Ascending aorta (tissue), 2 donors: ENCODE measurements at regions of chr1 and their contacts with region 1.

Region 1: DNA sequence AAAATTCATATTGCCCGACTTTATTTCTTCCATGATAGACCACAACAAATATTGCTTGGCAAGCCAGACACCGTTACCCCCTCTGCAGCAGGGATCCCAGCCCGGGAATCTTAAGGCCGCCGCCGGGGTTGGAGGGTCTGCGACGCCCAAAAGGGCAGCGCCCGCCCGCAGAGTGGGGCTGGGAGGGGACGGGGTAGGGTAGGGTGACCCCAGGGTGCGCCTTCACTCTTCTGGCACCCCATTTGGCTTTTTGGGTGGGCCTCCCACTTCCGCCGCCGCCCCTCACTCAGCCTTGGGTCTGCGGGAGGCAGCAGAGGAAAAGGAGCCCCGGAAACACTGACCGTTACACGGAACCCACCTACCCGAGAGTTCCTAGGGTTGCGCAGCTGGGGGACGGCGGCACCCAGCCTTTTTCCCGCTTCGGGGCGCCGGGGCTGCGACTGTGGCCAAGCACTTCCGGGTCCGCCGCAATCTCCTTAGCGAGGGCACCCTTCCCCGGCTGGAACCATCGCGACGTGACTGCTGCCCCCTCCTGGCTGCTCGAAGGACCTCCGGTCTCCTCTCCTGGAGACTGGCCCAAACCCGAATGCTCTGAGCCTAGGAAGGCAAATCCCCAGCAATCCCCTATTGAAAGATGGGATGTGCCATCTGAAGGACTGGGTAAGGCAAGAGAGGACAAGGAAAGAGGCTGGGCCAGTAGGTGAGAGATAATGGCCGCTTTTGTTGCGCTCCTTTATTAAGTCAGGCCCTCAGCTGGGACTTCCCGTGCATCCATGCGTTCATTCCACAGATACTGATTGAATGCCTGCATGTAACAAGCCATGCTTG is at the start of gene PIGC:
- DNase-seq: peak; percentile 24 to 94
- H3K4me3 ChIP-seq: peak within 1 kb of the TSS; percentile 84 to 98
- H3K27ac ChIP-seq: peak within 1 kb of the TSS; percentile 76 to 79
- H3K4me1 ChIP-seq: peaks cover 0 to 10% of the 10 kb centered on the region in 2 donors
- H3K27me3 ChIP-seq: no peaks in the 10 kb centered on the region
- CTCF ChIP-seq: peak; percentile 75 to 84 (median 82)
- total RNA-seq, gene PIGC: 20.0 TPM

Region 2: GRCh38 chr1:171801487-171801891 is 642.4 kb before region 1 on chr1:
- intact Hi-C with region 1: loop called (anchors 5 kb)
- DNase-seq: no peak
- H3K4me3 ChIP-seq: no peak overlapping the region
- H3K27ac ChIP-seq: no peak overlapping the region
- H3K4me1 ChIP-seq: no peaks in the 10 kb centered on the region
- H3K27me3 ChIP-seq: no peaks in the 10 kb centered on the region
- CTCF ChIP-seq: peak; percentile 56 to 82 (median 80)

Region 3: DNA sequence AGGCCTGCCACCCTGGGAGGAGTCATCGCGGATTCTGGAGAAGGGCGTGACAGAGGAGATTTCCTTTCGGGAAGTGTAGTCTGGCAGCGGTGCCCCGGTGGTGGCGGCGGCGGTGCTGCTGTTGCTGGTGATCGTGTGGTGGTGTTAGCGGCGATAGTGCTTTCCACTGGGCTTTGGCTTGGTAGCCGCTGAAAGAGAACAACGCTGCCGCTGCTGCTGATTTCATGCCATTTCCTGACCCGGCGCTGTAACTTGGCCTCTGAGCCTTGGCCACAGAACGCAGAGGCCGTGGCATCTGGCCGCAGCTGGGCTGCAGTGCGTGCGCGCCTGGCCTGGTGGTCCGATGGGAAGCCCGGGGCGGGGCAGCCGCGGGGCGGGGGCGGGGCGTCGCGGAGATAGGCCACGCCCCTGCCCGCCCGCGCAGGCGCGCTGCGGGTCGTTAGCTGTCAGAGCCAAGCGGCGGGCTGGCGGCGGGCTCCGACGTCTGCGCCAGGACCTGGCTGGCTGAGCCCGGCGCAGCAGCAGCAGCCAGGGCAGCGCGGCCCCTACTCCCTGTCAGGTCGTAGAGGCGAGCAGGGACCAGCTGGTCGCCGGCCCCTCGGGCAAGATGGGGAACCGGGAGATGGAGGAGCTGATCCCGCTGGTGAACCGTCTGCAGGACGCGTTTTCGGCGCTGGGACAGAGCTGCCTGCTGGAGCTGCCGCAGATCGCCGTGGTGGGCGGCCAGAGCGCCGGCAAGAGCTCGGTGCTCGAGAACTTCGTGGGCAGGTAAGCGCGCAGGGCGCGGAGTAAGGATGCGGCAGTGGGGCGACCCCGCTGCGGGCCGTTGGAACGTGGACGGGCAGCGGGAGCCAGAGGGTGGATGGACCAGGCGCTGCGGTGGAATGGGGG is 602.5 kb before region 1 on chr1 and contains the start of gene DNM3:
- intact Hi-C with region 1: loop called (anchors 5 kb)
- DNase-seq: peak; percentile 46 to 93
- H3K4me3 ChIP-seq: peak within 1 kb of the TSS; percentile 71 to 77
- H3K27ac ChIP-seq: peak within 1 kb of the TSS; percentile 66 to 73
- H3K4me1 ChIP-seq: no peaks in the 10 kb centered on the region
- H3K27me3 ChIP-seq: no peaks in the 10 kb centered on the region
- CTCF ChIP-seq: no peak
- total RNA-seq, gene DNM3: 9.6 TPM

Region 4: DNA sequence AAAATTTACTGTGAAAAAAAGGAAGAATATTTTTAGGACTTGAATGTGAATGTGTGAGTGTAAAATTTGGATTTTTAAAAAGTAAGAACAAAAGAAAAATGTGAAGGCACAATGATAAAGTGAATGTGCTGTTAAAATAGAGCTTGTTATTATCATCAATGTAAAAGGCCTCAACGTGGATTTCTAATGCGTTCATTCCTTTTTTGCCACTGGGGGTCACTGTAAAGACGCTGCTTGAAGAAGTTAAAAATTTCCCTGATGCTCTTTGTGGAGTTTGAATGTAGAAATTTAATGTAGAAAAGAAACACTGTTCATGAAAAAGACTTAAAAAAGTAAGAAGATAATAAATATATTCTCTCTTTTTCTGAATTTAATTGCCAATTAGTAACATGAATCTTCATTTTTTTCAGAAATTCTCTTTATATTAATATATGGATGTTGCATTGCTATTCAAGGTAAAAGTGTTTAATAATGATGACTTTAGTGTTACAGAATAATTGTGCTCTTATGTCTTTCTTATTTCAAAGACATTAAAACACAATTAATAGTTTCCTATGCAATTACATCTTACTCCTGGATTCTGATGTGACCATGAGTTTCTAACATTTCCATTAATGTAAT is 441.0 kb before region 1 on chr1:
- intact Hi-C with region 1: loop called (anchors 1 kb)
- DNase-seq: no peak
- H3K4me3 ChIP-seq: no peak overlapping the region
- H3K27ac ChIP-seq: no peak overlapping the region
- H3K4me1 ChIP-seq: no peaks in the 10 kb centered on the region
- H3K27me3 ChIP-seq: no peaks in the 10 kb centered on the region
- CTCF ChIP-seq: peak in 2 of 3 experiments; percentile 66 to 78

Region 5: GRCh38 chr1:172041742-172042141 is 402.1 kb before region 1 on chr1:
- intact Hi-C with region 1: loop called (anchors 2 kb)
- DNase-seq: no peak
- H3K4me3 ChIP-seq: peak overlapping the region in 1 of 2 donors; percentile 13
- H3K27ac ChIP-seq: no peak overlapping the region
- H3K4me1 ChIP-seq: no peaks in the 10 kb centered on the region
- H3K27me3 ChIP-seq: no peaks in the 10 kb centered on the region
- CTCF ChIP-seq: peak in 2 of 3 experiments; percentile 38 to 58

Region 6: DNA sequence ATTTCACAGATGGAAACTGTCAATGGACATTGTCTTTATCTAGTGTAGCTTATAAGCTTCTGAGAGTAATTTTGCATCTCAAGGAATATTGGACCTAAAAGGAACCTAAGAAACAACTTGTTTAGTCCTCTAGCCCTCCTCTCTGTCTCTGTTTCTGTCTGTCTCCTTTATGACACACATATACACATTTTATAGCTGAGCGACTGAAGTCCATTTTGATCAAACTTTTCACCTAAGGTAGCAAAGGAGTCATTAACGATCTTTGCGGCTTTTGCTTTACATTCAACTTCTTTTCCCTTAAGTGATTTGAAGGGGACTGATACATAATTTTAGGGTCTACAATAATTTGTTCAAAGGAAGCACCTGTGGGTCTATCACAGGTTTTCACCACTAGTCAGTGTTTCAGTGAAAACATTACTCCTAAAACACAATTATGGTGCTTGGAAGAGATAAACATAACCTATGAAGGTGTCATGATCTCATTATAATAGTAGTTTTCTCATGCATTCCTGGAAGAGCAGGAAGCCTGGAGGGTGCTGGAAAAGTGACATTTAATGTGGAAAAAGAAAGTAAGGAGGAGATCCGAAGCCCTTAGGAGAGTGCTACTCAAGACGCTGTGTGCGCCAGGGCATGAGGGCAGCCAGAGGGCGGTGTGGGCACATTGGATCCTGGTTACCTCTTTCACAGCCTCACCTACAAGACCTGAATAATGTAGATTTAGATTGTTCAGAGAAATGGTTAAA is 353.9 kb before region 1 on chr1:
- intact Hi-C with region 1: loop called (anchors 5 kb)
- DNase-seq: peak in 1 of 2 donors; percentile 71
- H3K4me3 ChIP-seq: no peak overlapping the region
- H3K27ac ChIP-seq: no peak overlapping the region
- H3K4me1 ChIP-seq: no peaks in the 10 kb centered on the region
- H3K27me3 ChIP-seq: no peaks in the 10 kb centered on the region
- CTCF ChIP-seq: peak; percentile 49 to 76 (median 51)

Region 7: GRCh38 chr1:172532700-172533509 is 89.1 kb after region 1 on chr1 and contains the start of gene SUCO:
- intact Hi-C with region 1: loop called (anchors 5 kb)
- DNase-seq: peak; percentile 100
- H3K4me3 ChIP-seq: peak within 1 kb of the TSS; percentile 80 to 83
- H3K27ac ChIP-seq: peak within 1 kb of the TSS; percentile 95 to 98
- H3K4me1 ChIP-seq: peaks cover 4 to 10% of the 10 kb centered on the region in 2 donors
- H3K27me3 ChIP-seq: no peaks in the 10 kb centered on the region
- CTCF ChIP-seq: peak in 1 of 3 experiments; percentile 5
- total RNA-seq, gene SUCO: 7.8 TPM